Activated CD4-positive, alpha-beta memory T cell treated with anti-CD3 and anti-CD28 coated beads for 36 hours (primary cell): ENCODE measurements at regions of chrX and their contacts with region 1.

Region 1: GRCh38 chrX:54182864-54183608 is at the start of gene FAM120C:
- DNase-seq: peak; percentile 77
- H3K4me3 Mint-ChIP-seq: peak within 1 kb of the TSS; percentile 78
- H3K27ac Mint-ChIP-seq: peak within 1 kb of the TSS; percentile 80
- H3K4me1 Mint-ChIP-seq: peaks cover 41% of the 10 kb centered on the region
- H3K27me3 Mint-ChIP-seq: no peaks in the 10 kb centered on the region
- total RNA-seq, gene FAM120C: 4.5 to 6.1 TPM

Region 2: DNA sequence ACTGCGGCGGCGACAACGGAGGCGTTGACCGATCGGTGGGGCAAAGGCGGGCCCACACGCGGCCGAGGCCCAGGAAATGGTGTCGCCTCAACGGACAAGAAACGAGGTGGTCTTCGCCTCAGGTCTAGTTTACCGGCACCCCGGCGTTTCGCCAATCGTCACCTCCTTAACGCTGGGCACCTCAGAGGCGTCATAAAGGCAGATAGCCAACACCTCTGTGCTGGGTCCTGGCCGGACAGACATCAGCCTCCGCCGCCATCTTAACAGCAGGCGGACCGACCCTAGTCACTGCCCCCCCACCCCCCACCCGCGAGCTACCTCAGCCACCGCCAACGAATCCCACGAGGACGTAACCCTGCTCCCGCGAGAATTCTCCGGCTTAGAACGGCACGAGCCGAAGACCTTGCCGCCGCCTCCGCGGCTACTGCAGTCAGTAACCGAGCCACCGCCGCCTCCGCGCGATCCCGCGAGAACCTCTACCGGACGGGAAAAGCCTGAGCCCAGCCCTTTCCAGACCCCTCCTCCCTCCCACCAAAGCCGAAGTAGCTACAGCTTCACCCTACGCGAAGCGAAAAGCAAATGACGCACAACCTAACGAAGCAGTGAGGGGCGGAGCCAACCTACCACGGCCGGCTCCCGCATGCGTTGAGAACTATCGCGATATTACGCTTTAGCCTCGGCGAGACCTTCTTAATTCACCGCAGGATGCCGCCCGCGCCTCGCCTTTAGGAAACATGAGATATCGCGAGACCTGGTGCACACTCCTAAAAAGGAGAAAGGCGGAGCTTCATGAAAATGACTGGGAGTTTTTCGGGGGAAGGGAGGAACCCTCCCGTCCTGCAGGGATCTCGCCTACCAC is 499.3 kb before region 1 on chrX:
- CTCF ChIA-PET with region 1: no interaction called
- POLR2A ChIA-PET with region 1: no interaction called
- intact Hi-C with region 1: loop called (anchors 2 kb)
- DNase-seq: peak; percentile 95
- H3K4me3 Mint-ChIP-seq: peak overlapping the region; percentile 92
- H3K27ac Mint-ChIP-seq: peak overlapping the region; percentile 96
- H3K4me1 Mint-ChIP-seq: peaks cover 27% of the 10 kb centered on the region
- H3K27me3 Mint-ChIP-seq: no peaks in the 10 kb centered on the region

Region 3: DNA sequence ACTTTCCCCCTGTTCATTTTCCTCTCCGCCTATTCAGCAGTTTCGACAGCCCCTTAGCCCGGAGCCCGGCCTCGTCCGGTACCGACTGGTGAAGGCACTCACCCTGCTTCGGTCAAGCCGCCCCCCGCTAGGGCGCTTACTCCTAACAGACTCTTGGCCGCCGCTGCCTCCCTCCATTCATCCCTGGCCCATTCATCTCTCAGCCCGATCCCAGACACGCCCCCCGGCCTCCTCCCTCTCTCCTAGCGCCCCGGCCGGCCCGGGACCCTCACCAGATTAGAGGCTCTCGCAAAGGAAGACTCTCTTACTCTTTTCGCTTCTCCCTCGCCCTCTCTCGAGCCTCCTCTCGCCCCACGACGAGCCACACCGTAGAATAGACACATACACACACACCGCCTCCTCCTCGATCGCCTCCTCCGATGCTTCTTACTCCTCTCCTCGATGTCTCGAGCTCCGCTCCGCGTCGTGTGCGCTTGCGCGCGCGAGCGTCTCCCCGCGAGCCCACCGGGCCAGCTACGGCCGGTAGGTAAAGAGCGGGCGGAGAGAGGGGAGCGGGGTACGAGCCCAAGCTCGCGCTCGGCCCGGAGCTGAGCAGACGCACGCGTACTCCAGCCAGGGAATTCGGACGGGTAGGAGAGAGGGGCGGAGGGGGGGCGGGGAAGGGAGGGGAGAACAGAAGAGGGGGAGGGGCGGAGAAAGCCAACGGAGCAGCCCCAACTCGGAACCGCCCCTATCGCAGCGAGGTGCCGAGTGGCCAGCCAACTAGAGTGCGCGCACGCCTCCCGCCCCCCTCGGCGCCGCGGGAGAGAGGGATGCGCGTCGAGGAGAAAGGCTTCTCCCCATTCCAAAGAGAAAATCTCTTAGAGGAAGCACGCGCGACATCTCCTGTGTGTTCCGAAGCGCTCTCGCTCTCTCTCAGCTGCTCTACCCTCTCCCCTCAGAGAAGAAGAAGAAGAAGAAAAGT is 174.7 kb after region 1 on chrX and contains the start of gene WNK3:
- CTCF ChIA-PET with region 1: no interaction called
- POLR2A ChIA-PET with region 1: no interaction called
- intact Hi-C with region 1: loop called (anchors 2 kb)
- DNase-seq: peak; percentile 51
- H3K4me3 Mint-ChIP-seq: peak within 1 kb of the TSS; percentile 75
- H3K27ac Mint-ChIP-seq: no peak within 1 kb of the TSS
- H3K4me1 Mint-ChIP-seq: peaks cover 19% of the 10 kb centered on the region
- H3K27me3 Mint-ChIP-seq: peaks cover 28% of the 10 kb centered on the region
- total RNA-seq, gene WNK3: 0.19 to 0.46 TPM

Region 4: DNA sequence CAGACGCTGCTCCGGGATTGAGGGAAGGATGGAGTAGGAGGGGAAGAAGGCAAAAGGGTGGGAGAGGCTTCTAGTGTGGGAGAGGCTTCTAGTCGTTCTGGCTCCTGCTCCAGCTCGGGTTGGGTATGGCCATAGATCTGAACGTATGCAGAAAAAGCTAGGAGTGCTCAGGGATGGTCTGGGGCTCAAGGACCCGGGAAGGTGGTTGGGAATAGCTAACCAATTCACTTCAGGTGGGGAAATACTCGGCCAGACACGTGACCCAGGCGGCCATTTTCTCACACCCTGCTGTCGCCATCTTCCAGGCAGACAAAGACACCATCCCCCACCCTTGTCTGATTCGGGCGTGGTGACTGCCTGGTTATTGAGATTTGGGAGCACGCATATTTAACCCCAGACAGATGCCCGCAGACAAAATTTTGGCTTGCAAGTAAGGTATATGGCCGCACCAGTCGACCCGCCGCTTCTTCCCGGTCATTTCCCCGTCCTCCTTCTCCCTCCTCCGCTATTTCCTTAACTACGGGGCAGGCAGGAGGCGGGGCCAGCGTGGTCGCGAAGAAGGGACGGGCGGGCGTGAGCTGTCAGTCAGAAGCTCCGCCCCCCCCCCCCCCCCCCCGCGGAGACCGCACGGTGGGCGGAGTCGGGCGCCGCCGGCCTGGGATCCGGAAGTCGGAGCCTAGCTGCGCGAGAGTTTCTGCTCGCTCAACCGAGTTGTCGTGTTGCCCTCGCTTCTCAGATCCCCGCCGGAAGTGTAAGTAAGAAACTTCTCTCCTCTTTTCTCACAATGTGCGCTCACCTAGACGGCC is 346.7 kb after region 1 on chrX and contains the start of gene GNL3L:
- CTCF ChIA-PET with region 1: no interaction called
- POLR2A ChIA-PET with region 1: no interaction called
- intact Hi-C with region 1: loop called (anchors 10 kb)
- DNase-seq: peak; percentile 89
- H3K4me3 Mint-ChIP-seq: peak within 1 kb of the TSS; percentile 89
- H3K27ac Mint-ChIP-seq: peak within 1 kb of the TSS; percentile 91
- H3K4me1 Mint-ChIP-seq: peaks cover 36% of the 10 kb centered on the region
- H3K27me3 Mint-ChIP-seq: no peaks in the 10 kb centered on the region
- total RNA-seq, gene GNL3L: 45.8 to 45.9 TPM

Region 5: DNA sequence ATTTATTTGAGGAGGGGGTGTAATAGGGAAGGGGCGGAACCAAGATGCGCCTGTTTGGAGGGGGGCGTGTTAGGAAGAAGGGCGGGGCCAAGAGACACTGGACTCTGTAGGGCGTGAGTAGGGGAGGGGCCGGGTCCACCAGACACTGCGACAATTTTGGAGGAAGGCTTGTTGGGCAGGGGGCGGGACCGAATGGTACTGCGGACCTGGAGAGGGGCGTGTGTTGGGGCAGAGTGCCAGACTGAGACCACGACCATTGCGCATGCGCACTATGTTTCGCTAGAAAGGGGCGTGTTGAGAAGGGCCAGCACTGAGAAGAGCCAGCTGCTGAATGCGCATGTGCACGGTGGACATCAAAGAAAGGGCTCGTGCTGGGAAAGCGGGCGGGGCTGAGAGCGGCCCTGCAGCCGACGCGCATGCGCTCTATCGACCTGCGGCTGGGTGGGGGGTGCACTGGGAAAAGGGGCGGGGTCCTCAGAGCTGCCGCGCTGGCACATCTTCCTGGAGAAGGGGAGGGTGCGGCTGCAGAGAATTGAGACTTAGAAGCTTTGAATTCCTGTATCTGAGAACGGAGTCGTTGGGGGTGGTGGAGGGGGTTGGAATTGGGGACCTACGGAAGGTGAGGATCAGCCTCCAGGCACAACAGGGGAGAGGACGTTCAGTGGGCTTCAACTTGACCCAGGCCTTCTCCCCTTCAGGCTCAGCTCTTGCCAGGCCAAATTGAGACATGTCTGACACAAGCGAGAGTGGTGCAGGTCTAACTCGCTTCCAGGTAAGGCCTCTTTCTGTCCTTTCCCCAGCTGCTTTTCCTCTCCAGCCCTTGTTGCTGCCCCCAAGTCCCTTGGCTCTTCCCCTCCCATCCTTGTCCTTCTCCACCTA is 625.8 kb after region 1 on chrX:
- CTCF ChIA-PET with region 1: no interaction called
- POLR2A ChIA-PET with region 1: no interaction called
- intact Hi-C with region 1: loop called (anchors 2 kb)
- DNase-seq: peak; percentile 94
- H3K4me3 Mint-ChIP-seq: peak overlapping the region; percentile 90
- H3K27ac Mint-ChIP-seq: peak overlapping the region; percentile 90
- H3K4me1 Mint-ChIP-seq: peaks cover 13% of the 10 kb centered on the region
- H3K27me3 Mint-ChIP-seq: peaks cover 2% of the 10 kb centered on the region

Region 6: GRCh38 chrX:55160685-55161552 is 977.9 kb after region 1 on chrX:
- CTCF ChIA-PET with region 1: no interaction called
- POLR2A ChIA-PET with region 1: no interaction called
- intact Hi-C with region 1: loop called (anchors 10 kb)
- DNase-seq: peak; percentile 92
- H3K4me3 Mint-ChIP-seq: peak overlapping the region; percentile 83
- H3K27ac Mint-ChIP-seq: peak overlapping the region; percentile 94
- H3K4me1 Mint-ChIP-seq: peaks cover 9% of the 10 kb centered on the region
- H3K27me3 Mint-ChIP-seq: no peaks in the 10 kb centered on the region